CD4-positive, alpha-beta T cell (primary cell): ENCODE measurements at regions of chr1 and their contacts with region 1.

Region 1: DNA sequence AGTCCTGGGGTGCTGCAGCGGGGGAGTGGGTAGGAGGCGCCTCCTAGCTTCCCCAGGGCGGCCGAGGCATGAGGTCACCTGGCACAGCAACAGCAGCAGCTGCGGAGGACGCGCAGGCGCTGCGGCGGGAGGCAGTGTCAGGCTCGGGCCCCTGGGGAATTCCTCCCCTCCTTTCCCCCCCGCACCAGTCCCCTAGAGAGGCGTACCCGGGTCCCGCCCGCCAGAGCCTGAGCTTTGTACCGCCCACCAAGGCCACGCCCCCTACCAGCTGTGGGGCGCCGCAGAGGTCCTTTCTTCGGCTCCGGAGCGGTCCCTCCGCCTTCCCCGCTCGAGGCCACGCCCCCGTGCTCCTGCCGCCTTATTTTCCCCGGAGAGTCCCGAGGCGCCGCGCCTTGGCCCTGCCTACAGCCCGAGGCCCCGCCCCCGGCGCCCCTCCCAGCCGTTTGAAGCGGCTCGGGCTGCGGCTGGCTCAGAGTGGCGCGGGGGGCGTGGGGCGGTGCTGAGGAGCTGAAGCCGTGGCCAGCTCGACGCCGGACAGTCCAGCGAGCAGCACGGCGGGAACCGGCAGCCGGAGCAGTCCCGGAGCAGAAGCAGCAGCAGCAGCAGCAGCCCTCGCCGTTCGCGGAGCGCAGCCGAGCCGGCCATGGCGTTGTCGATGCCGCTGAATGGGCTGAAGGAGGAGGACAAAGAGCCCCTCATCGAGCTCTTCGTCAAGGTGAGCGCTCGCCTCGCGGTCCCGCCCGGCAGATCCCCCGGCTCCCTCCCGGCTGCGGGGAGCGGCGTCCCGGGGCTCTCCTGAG is at the start of gene CLIC4:
- DNase-seq: peak; percentile 98 to 100 (median 99)
- ATAC-seq: peak; percentile 87
- H3K4me3 ChIP-seq: peak within 1 kb of the TSS; percentile 58
- H3K4me3 Mint-ChIP-seq: peak within 1 kb of the TSS; percentile 93
- H3K27ac ChIP-seq: no peak within 1 kb of the TSS
- H3K27ac Mint-ChIP-seq: peak within 1 kb of the TSS; percentile 80
- H3K4me1 ChIP-seq: peaks cover 15% of the 10 kb centered on the region
- H3K4me1 Mint-ChIP-seq: peaks cover 18% of the 10 kb centered on the region
- H3K27me3 ChIP-seq: peaks cover 0 to 3% of the 10 kb centered on the region in 2 experiments
- H3K27me3 Mint-ChIP-seq: no peaks in the 10 kb centered on the region
- CTCF ChIP-seq: no peak
- total RNA-seq, gene CLIC4: 1.1 to 1.3 TPM

Region 2: GRCh38 chr1:24409535-24409934 is 335.6 kb before region 1 on chr1:
- CTCF ChIA-PET with region 1: no interaction called
- POLR2A ChIA-PET with region 1: no interaction called
- intact Hi-C with region 1: loop called in 1 of 2 experiments (anchors 10 kb)
- DNase-seq: no peak
- ATAC-seq: no peak
- H3K4me3 ChIP-seq: no peak overlapping the region
- H3K4me3 Mint-ChIP-seq: no peak overlapping the region
- H3K27ac ChIP-seq: no peak overlapping the region
- H3K27ac Mint-ChIP-seq: no peak overlapping the region
- H3K4me1 ChIP-seq: peaks cover 14% of the 10 kb centered on the region
- H3K4me1 Mint-ChIP-seq: peaks cover 27% of the 10 kb centered on the region
- H3K27me3 ChIP-seq: no peaks in the 10 kb centered on the region
- H3K27me3 Mint-ChIP-seq: no peaks in the 10 kb centered on the region
- CTCF ChIP-seq: no peak

Region 3: DNA sequence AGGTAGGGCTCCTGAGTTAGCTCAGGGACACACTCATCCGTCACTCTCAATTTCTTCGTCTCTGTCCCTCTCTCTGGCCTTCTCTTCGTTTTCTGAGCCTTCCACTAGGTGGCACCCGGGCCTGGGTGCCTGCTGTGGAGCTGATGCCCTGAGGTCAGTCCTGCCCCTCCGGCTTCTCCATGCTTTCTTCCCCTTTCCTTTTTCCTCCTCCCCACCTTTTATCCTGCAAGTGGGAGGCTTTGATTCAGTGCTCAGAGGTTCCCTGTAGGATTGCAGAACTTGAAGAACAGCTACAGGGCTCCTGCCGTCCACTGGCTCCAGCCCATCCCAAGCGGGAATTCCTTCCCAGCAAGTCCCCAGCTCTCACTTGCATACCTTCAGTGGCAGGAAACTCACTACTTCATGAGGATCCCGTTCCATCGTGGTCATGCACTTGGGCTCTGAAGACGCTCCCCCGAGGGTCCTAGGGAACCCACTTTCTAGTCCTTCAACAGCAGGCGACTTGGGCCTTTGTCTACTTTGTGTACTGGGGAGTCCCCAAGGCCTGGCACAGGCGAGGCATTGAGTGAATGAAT is 56.4 kb before region 1 on chr1:
- CTCF ChIA-PET with region 1: interaction called, 3 read pairs
- POLR2A ChIA-PET with region 1: interaction called, 3 read pairs
- intact Hi-C with region 1: loop called in 1 of 2 experiments (anchors 2 kb)
- DNase-seq: peak; percentile 26 to 76 (median 49)
- ATAC-seq: peak; percentile 65
- H3K4me3 ChIP-seq: no peak overlapping the region
- H3K4me3 Mint-ChIP-seq: no peak overlapping the region
- H3K27ac ChIP-seq: no peak overlapping the region
- H3K27ac Mint-ChIP-seq: no peak overlapping the region
- H3K4me1 ChIP-seq: no peaks in the 10 kb centered on the region
- H3K4me1 Mint-ChIP-seq: no peaks in the 10 kb centered on the region
- H3K27me3 ChIP-seq: no peaks in the 10 kb centered on the region
- H3K27me3 Mint-ChIP-seq: no peaks in the 10 kb centered on the region
- CTCF ChIP-seq: peak; percentile 87

Region 4: GRCh38 chr1:24779689-24780464 is 34.8 kb after region 1 on chr1:
- CTCF ChIA-PET with region 1: no interaction called
- POLR2A ChIA-PET with region 1: no interaction called
- intact Hi-C with region 1: no loop called
- DNase-seq: no peak
- ATAC-seq: no peak
- H3K4me3 ChIP-seq: no peak overlapping the region
- H3K4me3 Mint-ChIP-seq: no peak overlapping the region
- H3K27ac ChIP-seq: no peak overlapping the region
- H3K27ac Mint-ChIP-seq: no peak overlapping the region
- H3K4me1 ChIP-seq: no peaks in the 10 kb centered on the region
- H3K4me1 Mint-ChIP-seq: no peaks in the 10 kb centered on the region
- H3K27me3 ChIP-seq: no peaks in the 10 kb centered on the region
- H3K27me3 Mint-ChIP-seq: no peaks in the 10 kb centered on the region
- CTCF ChIP-seq: no peak